ENCODE measurements at regions of chr1 and their contacts with region 1.

Region 1: DNA sequence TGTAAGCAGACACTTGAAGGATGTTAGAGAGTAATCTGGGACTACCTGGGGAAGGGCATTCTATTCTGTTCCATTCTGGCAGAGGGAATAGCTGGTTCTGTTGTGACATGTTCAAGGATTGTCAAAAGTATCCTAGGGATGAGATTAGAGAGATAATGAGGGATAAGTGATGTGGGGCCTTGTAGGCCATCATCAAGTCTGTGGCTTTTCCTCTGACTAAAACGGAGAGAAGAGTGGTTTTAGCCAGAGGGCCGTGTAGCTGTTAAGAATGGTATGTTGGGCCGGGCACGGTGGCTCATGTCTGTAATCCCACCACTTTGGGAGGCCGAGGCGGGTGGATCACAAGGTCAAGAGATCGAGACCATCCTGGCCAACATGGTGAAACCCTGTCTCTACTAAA is 23.6 kb downstream of the TGFB2 start:
- DNase-seq: no peak
- ATAC-seq: no peak
- H3K4me3 Mint-ChIP-seq: no peak overlapping the region
- H3K27ac Mint-ChIP-seq: no peak overlapping the region; the same call in 1 of the 2 replicates
- H3K4me1 Mint-ChIP-seq: peaks cover 19% of the 10 kb centered on the region
- H3K27me3 Mint-ChIP-seq: no peaks in the 10 kb centered on the region
- CTCF ChIP-seq: no peak

Region 2: GRCh38 chr1:217389895-217390294 is 978.8 kb before region 1 on chr1:
- CTCF ChIA-PET with region 1: no interaction called
- POLR2A ChIA-PET with region 1: interaction called, 15 read pairs
- DNase-seq: no peak
- ATAC-seq: no peak
- H3K4me3 Mint-ChIP-seq: no peak overlapping the region
- H3K27ac Mint-ChIP-seq: no peak overlapping the region
- H3K4me1 Mint-ChIP-seq: no peaks in the 10 kb centered on the region
- H3K27me3 Mint-ChIP-seq: peaks cover 20% of the 10 kb centered on the region
- CTCF ChIP-seq: no peak